ENCODE measurements at regions of chr12 and their contacts with region 1.

Region 1: GRCh38 chr12:6554168-6555017 is 1.4 kb downstream of the IFFO1 start:
- DNase-seq: peak in 1 of 2 donors; percentile 90
- H3K4me3 ChIP-seq: peak overlapping the region; percentile 70 to 82
- H3K27ac ChIP-seq: peak overlapping the region; percentile 98 to 99
- H3K4me1 ChIP-seq: peaks cover 20 to 55% of the 10 kb centered on the region in 2 donors
- H3K27me3 ChIP-seq: no peaks in the 10 kb centered on the region
- CTCF ChIP-seq: peak; percentile 19 to 63 (median 53)

Region 2: GRCh38 chr12:5889381-5890047 is 664.9 kb before region 1 on chr12:
- intact Hi-C with region 1: no loop called
- DNase-seq: no peak
- H3K4me3 ChIP-seq: no peak overlapping the region
- H3K27ac ChIP-seq: no peak overlapping the region
- H3K4me1 ChIP-seq: no peaks in the 10 kb centered on the region
- H3K27me3 ChIP-seq: no peaks in the 10 kb centered on the region
- CTCF ChIP-seq: no peak

Region 3: GRCh38 chr12:6215932-6216494 is 338.4 kb before region 1 on chr12:
- intact Hi-C with region 1: loop called (anchors 5 kb)
- DNase-seq: peak; percentile 84 to 97
- H3K4me3 ChIP-seq: peak overlapping the region; percentile 25 to 32
- H3K27ac ChIP-seq: peak overlapping the region; percentile 93 to 94
- H3K4me1 ChIP-seq: peaks cover 30 to 89% of the 10 kb centered on the region in 2 donors
- H3K27me3 ChIP-seq: no peaks in the 10 kb centered on the region
- CTCF ChIP-seq: no peak

Region 4: GRCh38 chr12:6394398-6394797 is 160.0 kb before region 1 on chr12:
- intact Hi-C with region 1: no loop called
- DNase-seq: no peak
- H3K4me3 ChIP-seq: no peak overlapping the region
- H3K27ac ChIP-seq: peak overlapping the region; percentile 1 to 5
- H3K4me1 ChIP-seq: peaks cover 5 to 6% of the 10 kb centered on the region in 2 donors
- H3K27me3 ChIP-seq: no peaks in the 10 kb centered on the region
- CTCF ChIP-seq: no peak

Region 5: DNA sequence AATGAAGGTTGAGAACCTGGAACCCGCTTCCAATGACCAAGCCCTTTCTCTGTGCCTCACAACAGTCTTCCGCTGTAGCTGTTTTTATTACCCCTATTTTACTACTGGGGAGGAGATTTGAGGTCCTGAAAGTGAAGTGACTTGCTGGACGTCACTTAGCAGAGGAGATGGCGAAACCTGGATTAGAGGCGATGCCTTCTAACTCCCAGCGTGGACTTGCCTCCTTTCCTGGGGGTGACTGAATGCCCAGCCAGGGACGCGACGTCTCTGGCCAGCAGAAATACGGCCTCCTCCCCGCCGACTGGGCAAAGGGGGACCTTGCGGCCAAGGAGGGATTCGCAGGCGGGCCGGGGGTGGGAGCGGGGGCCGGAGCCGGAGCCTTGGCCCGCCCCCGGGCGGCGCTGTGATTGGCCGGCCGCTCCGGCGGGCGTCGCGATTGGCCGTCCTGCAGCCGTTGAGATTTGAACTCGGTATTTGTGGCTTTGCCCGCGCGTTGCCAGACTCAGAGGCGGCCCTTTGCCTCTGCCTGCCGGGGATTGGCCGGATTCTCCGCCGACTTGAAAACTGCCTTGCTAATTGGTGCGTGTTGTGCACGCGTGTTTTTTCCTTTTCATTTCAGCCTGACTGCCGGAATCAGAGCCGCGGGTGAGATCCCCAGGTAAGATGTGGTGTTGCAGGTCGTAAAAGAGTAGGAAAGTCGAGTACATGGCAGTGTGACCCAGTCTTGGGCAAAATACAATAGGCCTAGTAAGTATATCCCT is 60.7 kb before region 1 on chr12 and contains the start of gene NCAPD2:
- intact Hi-C with region 1: loop called (anchors 1 kb)
- DNase-seq: peak; percentile 89 to 98
- H3K4me3 ChIP-seq: peak within 1 kb of the TSS; percentile 67 to 77
- H3K27ac ChIP-seq: peak within 1 kb of the TSS; percentile 79 to 98
- H3K4me1 ChIP-seq: peaks cover 8 to 18% of the 10 kb centered on the region in 2 donors
- H3K27me3 ChIP-seq: no peaks in the 10 kb centered on the region
- CTCF ChIP-seq: peak in 2 of 3 experiments; percentile 31 to 73
- total RNA-seq, gene NCAPD2: 11.7 TPM

Region 6: GRCh38 chr12:6540181-6540877 is 14.1 kb before region 1 on chr12:
- intact Hi-C with region 1: loop called (anchors 1 kb)
- DNase-seq: peak; percentile 83 to 97
- H3K4me3 ChIP-seq: peak overlapping the region in 1 of 2 donors; percentile 21
- H3K27ac ChIP-seq: peak overlapping the region; percentile 85 to 98
- H3K4me1 ChIP-seq: peaks cover 23 to 31% of the 10 kb centered on the region in 2 donors
- H3K27me3 ChIP-seq: no peaks in the 10 kb centered on the region
- CTCF ChIP-seq: no peak

Region 7: DNA sequence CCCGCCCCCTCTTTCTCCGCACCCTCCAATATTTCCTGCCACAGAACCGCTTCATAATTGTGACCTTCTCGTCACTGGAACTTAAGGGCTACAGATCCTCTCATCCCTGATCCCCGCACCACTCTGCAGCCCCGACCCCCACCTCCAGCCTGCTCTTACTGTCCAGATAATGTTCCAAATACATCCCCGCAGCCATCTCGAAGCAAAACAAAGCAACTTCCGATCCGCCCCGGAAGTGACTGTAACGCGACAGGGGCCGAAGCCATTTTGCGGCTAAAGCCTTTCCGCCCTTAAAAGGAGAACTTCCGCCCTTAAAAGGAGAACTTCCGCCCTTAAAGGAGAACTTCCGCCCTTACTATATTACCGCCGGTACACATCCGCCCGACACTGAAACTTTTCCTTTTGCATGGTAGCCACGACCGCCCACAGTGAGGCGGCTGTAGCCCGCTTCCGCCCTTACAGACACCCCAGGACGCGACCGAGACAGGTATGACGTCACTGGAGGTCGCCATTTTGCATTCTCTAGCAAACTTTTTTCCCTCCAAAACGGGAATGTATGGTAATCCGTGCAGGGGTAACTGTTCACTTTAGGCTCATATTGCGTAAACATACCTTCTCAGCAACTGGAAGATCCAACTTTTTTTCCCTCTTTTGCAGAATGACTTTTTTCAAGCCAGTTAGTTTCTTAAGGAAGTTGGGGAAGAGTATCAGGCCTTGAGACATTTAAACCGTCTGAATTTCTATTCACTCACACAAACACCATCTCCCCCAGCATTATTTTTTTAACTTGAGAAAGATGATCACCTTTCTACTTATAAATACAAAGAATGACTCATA is 108.7 kb after region 1 on chr12 and contains the start of gene ING4:
- intact Hi-C with region 1: loop called (anchors 5 kb)
- DNase-seq: peak; percentile 96 to 99
- H3K4me3 ChIP-seq: peak within 1 kb of the TSS; percentile 75 to 82
- H3K27ac ChIP-seq: peak within 1 kb of the TSS; percentile 77 to 80
- H3K4me1 ChIP-seq: peaks cover 4 to 12% of the 10 kb centered on the region in 2 donors
- H3K27me3 ChIP-seq: no peaks in the 10 kb centered on the region
- CTCF ChIP-seq: no peak
- total RNA-seq, gene ING4: 2.6 TPM

Measured in ascending aorta (tissue), 2 donors.